ENCODE measurements at regions of chr15 and their contacts with region 1.

Region 1: DNA sequence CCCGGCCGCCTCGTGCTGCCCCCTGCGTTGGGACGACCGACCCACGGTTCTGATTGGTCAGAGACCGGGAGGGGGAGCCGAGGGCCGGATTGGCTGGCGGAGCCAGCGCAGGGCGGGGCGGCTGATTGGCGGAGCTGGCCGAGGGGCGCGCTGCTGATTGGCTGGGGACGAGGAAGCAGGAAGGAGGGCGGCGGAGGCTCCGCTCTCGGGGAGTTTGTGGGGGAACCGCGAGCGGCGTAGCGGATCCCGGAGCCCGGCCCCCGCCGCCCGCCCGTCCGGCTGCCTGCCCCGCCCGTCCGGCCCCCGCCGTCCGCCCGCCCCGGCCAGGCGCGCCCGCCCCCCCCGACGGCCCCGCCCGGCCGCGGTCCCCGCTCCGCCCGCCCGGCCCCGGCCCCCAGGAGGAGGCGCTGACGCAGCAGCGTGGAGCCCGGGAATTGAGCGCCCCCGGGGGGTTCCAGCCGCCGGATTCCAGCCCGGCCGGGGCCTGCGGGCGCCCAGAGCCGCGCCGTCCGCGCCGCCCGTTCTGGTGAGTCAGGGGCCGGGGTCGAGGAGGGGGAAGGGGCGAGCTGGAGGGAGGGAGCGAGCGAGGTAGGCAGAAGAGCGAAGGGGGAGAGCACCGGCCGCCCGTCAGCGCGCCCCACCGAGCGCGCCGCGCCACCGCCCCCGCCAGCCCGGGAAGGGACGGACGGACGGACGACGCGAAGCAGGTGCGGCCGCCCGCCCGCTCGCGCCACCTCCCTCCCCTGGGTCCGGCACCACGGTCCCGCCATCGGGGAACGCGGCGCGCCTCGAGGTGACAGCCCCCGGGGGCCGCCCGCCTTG is at the start of gene BAHD1:
- DNase-seq: peak; percentile 97 to 100 (median 98)
- ATAC-seq: peak; percentile 83
- H3K4me3 ChIP-seq: peak within 1 kb of the TSS; percentile 80
- H3K27ac ChIP-seq: peak within 1 kb of the TSS; percentile 85
- H3K4me1 ChIP-seq: peaks cover 53 to 69% of the 10 kb centered on the region in 2 experiments
- H3K27me3 ChIP-seq: no peaks in the 10 kb centered on the region
- CTCF ChIP-seq: peak in 2 of 3 experiments; percentile 38 to 71; a peak in 4 of 6 replicates
- EP300 ChIP-seq: no peak
- POLR2A ChIP-seq: no peak
- RAD21 ChIP-seq: no peak; a peak in 1 of 4 replicates
- polyA plus RNA-seq, gene BAHD1: 0.55 to 0.80 TPM

Region 2: GRCh38 chr15:40430271-40430805 is 10.6 kb before region 1 on chr15:
- CTCF ChIA-PET with region 1: no interaction called
- POLR2A ChIA-PET with region 1: interaction called, 16 read pairs
- in situ Hi-C with region 1: no loop called
- intact Hi-C with region 1: no loop called
- DNase-seq: peak; percentile 64 to 82 (median 71)
- ATAC-seq: peak; percentile 88
- H3K4me3 ChIP-seq: no peak overlapping the region
- H3K27ac ChIP-seq: no peak overlapping the region; the same call in 2 of the 3 replicates
- H3K4me1 ChIP-seq: peaks cover 28 to 34% of the 10 kb centered on the region in 2 experiments; a peak in 4 of 5 replicates
- H3K27me3 ChIP-seq: no peaks in the 10 kb centered on the region
- CTCF ChIP-seq: no peak
- EP300 ChIP-seq: no peak
- POLR2A ChIP-seq: no peak
- RAD21 ChIP-seq: no peak

Region 3: GRCh38 chr15:40454904-40455391 is 14.0 kb after region 1 on chr15:
- CTCF ChIA-PET with region 1: no interaction called
- POLR2A ChIA-PET with region 1: interaction called, 89 read pairs
- in situ Hi-C with region 1: no loop called
- intact Hi-C with region 1: no loop called
- DNase-seq: peak in 2 of 4 experiments; percentile 35 to 47
- ATAC-seq: peak; percentile 36; the same call in 2 of the 3 replicates
- H3K4me3 ChIP-seq: no peak overlapping the region
- H3K27ac ChIP-seq: peak overlapping the region; percentile 50; the same call in 1 of the 3 replicates
- H3K4me1 ChIP-seq: peaks cover 41 to 49% of the 10 kb centered on the region in 2 experiments
- H3K27me3 ChIP-seq: no peaks in the 10 kb centered on the region
- CTCF ChIP-seq: no peak
- EP300 ChIP-seq: no peak
- POLR2A ChIP-seq: no peak
- RAD21 ChIP-seq: no peak

Region 4: GRCh38 chr15:40470423-40471104 is 29.6 kb after region 1 on chr15 and contains the start of gene CHST14:
- CTCF ChIA-PET with region 1: interaction called, 4 read pairs
- POLR2A ChIA-PET with region 1: interaction called, 6 read pairs
- in situ Hi-C with region 1: no loop called
- intact Hi-C with region 1: loop called (anchors 2 kb)
- DNase-seq: peak in 2 of 4 experiments; percentile 77 to 89
- ATAC-seq: peak; percentile 82
- H3K4me3 ChIP-seq: peak within 1 kb of the TSS; percentile 53
- H3K27ac ChIP-seq: peak within 1 kb of the TSS; percentile 74
- H3K4me1 ChIP-seq: peaks cover 35 to 51% of the 10 kb centered on the region in 2 experiments
- H3K27me3 ChIP-seq: no peaks in the 10 kb centered on the region
- CTCF ChIP-seq: peak in 1 of 3 experiments; percentile 16; a peak in 2 of 6 replicates
- EP300 ChIP-seq: no peak
- POLR2A ChIP-seq: 0 out of 2 replicates have a peak, but pooled peaks have one; percentile 39
- RAD21 ChIP-seq: no peak
- polyA plus RNA-seq, gene CHST14: 1.6 to 2.3 TPM

Region 5: DNA sequence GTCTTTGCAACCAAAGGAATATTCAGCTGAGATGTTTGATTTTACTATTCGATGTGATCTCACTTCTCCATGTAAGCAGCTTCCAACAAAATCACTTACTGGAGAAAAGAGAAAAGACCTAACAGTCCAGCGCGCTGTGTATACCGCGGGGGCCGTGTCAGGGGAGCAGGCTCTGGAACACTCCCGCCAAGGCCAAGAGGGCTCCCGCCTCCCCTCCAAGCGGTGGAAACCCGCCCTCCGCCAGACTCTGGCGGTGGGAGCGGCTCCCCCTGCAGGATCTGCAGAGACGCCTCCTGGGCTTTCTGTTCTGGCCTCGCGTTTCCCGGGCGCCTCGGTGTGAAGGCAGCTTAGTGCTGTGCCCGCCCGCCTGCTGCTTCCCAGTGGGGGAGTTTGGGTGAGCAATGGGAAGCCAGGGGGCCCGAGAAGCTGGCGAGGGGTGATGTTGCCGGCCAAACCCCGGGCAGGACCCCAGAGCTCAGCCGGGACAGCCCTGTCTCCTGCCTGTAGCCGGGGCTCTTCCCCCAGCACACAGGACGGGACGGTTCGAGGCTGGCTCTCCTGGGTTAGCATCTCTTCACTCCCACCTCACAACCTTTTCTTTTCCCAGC is 66.1 kb after region 1 on chr15:
- CTCF ChIA-PET with region 1: no interaction called
- POLR2A ChIA-PET with region 1: interaction called, 5 read pairs
- in situ Hi-C with region 1: no loop called
- intact Hi-C with region 1: loop called (anchors 5 kb)
- DNase-seq: peak; percentile 78 to 93 (median 86)
- ATAC-seq: peak; percentile 93
- H3K4me3 ChIP-seq: no peak overlapping the region
- H3K27ac ChIP-seq: peak overlapping the region; percentile 34; the same call in 1 of the 3 replicates
- H3K4me1 ChIP-seq: peaks cover 19 to 20% of the 10 kb centered on the region in 2 experiments
- H3K27me3 ChIP-seq: no peaks in the 10 kb centered on the region
- CTCF ChIP-seq: peak; percentile 81 to 94 (median 89)
- EP300 ChIP-seq: peak; percentile 32; the same call in 1 of the 2 replicates
- POLR2A ChIP-seq: peak; percentile 49
- RAD21 ChIP-seq: peak; percentile 47 to 80

Region 6: DNA sequence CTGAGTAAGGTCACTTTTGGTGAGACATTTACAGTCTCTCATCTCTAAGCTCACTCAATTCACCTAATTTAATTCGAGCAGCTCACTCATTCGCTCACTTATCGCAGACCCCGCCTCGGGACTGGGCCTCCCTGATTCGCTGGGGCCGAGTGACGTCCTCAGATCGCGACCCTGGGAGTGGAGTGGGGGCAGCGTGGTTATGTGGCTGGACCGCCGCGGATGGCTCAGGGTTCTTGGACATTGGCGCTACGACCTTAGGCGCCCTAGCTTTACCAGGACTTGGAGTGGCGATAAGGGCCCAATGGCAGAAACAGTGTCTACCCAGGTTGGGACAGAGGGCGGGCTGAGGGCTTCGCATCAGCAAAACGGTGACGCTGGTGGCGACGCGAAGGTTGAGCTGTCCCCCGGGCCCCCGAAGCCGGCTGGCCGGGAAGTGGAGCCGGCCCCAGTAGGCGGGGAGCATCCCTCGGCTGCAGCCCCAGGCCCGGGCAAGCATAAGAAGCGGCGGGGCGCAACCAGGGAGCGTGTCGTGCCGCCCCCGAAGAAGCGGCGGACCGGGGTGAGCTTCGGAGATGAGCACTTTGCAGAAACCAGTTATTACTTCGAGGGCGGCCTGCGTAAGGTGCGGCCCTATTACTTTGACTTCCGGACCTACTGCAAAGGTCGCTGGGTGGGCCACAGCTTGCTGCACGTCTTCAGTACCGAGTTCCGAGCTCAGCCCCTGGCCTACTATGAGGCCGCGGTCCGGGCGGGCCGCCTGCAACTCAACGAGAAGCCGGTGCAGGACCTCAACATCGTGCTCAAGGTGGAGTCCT is 128.4 kb after region 1 on chr15 and contains the start of gene RPUSD2:
- CTCF ChIA-PET with region 1: no interaction called
- POLR2A ChIA-PET with region 1: no interaction called
- in situ Hi-C with region 1: no loop called
- intact Hi-C with region 1: no loop called
- DNase-seq: peak; percentile 93 to 97 (median 96)
- ATAC-seq: peak; percentile 77
- H3K4me3 ChIP-seq: peak within 1 kb of the TSS; percentile 91
- H3K27ac ChIP-seq: peak within 1 kb of the TSS; percentile 82
- H3K4me1 ChIP-seq: peaks cover 15 to 23% of the 10 kb centered on the region in 2 experiments; a peak in 4 of 5 replicates
- H3K27me3 ChIP-seq: no peaks in the 10 kb centered on the region
- CTCF ChIP-seq: no peak
- EP300 ChIP-seq: no peak
- POLR2A ChIP-seq: peak; percentile 93
- RAD21 ChIP-seq: no peak
- polyA plus RNA-seq, gene RPUSD2: 3.7 to 5.0 TPM